GM12878 (cell line): ENCODE measurements at regions of chr16 and their contacts with region 1.

Region 1: GRCh38 chr16:68800257-68800875 is 43.0 kb upstream of the TANGO6 start:
- DNase-seq: peak; percentile 66
- ATAC-seq: peak; percentile 99
- H3K4me3 ChIP-seq: no peak overlapping the region
- H3K27ac ChIP-seq: 0 out of 2 replicates have a peak overlapping the region, but pooled peaks have one; percentile 13
- H3K4me1 ChIP-seq: no peaks in the 10 kb centered on the region
- H3K27me3 ChIP-seq: no peaks in the 10 kb centered on the region
- CTCF ChIP-seq: peak; percentile 84 to 93 (median 85)
- EP300 ChIP-seq: no peak
- POLR2A ChIP-seq: no peak
- RAD21 ChIP-seq: peak; percentile 100

Region 2: GRCh38 chr16:68704232-68704867 is 96.0 kb before region 1 on chr16:
- CTCF ChIA-PET with region 1: interaction called, 34 read pairs
- POLR2A ChIA-PET with region 1: no interaction called
- RAD21 ChIA-PET with region 1: interaction called, 18 read pairs
- SMC1A ChIA-PET with region 1: interaction called, 16 read pairs
- in situ Hi-C with region 1: loop called (anchors 5 kb)
- intact Hi-C with region 1: loop called (anchors 1 kb)
- DNase-seq: no peak
- ATAC-seq: peak; percentile 93
- H3K4me3 ChIP-seq: no peak overlapping the region
- H3K27ac ChIP-seq: no peak overlapping the region
- H3K4me1 ChIP-seq: peaks cover 3% of the 10 kb centered on the region; the same call in 1 of the 2 replicates
- H3K27me3 ChIP-seq: no peaks in the 10 kb centered on the region
- CTCF ChIP-seq: peak; percentile 82 to 89 (median 87)
- EP300 ChIP-seq: no peak
- POLR2A ChIP-seq: no peak
- RAD21 ChIP-seq: peak; percentile 98

Region 3: GRCh38 chr16:68711421-68712139 is 88.8 kb before region 1 on chr16:
- CTCF ChIA-PET with region 1: interaction called, 17 read pairs
- POLR2A ChIA-PET with region 1: no interaction called
- RAD21 ChIA-PET with region 1: interaction called, 18 read pairs
- SMC1A ChIA-PET with region 1: interaction called, 16 read pairs
- in situ Hi-C with region 1: loop called (anchors 5 kb)
- intact Hi-C with region 1: no loop called
- DNase-seq: no peak
- ATAC-seq: peak; percentile 86
- H3K4me3 ChIP-seq: no peak overlapping the region
- H3K27ac ChIP-seq: no peak overlapping the region
- H3K4me1 ChIP-seq: peaks cover 7% of the 10 kb centered on the region
- H3K27me3 ChIP-seq: no peaks in the 10 kb centered on the region
- CTCF ChIP-seq: no peak
- EP300 ChIP-seq: no peak
- POLR2A ChIP-seq: no peak
- RAD21 ChIP-seq: no peak

Region 4: DNA sequence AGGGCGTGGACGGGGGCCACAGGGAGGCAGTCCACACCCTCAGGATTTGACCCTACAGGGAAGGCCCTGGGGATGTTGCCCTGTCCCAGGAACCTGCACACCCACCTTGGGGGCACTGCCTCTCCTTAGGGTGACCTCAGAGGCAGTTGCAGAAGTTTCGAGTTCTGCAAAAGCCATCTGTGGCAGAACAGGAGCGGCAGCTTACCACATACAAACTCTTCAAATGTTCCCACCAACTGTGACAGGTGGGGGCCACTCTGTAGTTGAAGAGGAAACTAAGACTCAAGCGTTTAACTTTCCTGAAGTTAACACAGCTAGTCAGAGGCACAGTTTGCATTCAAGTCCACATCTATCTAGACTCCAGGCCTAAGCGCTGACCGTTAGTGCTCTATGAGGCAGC is 18.2 kb before region 1 on chr16:
- CTCF ChIA-PET with region 1: interaction called, 4 read pairs
- POLR2A ChIA-PET with region 1: interaction called, 3 read pairs
- RAD21 ChIA-PET with region 1: interaction called, 6 read pairs
- SMC1A ChIA-PET with region 1: interaction called, 33 read pairs
- in situ Hi-C with region 1: no loop called
- intact Hi-C with region 1: no loop called
- DNase-seq: no peak
- ATAC-seq: peak; percentile 80
- H3K4me3 ChIP-seq: peak overlapping the region; percentile 26
- H3K27ac ChIP-seq: peak overlapping the region; percentile 84
- H3K4me1 ChIP-seq: peaks cover 36% of the 10 kb centered on the region
- H3K27me3 ChIP-seq: no peaks in the 10 kb centered on the region
- CTCF ChIP-seq: no peak
- EP300 ChIP-seq: no peak
- POLR2A ChIP-seq: no peak
- RAD21 ChIP-seq: no peak